GM12878 (cell line): ENCODE measurements at regions of chr12 and their contacts with region 1.

Region 1: DNA sequence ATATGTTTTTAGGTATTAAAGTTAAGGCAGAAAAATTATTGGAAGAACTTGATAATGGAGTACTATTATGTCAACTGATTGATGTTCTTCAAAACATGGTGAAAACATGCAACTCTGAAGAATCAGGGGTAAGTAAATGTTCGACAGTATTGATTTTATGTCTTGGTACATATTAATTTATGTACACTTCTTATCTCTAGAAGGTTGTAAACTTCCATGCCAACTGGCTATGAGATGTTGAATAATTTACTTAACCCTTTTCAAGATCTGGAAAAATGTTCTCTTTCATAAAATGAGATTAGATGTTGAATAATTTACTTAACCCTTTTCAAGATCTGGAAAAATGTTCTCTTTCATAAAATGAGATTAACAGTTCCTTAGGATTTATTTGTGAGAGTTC is 28.1 kb downstream of the GAS2L3 start:
- DNase-seq: no peak
- ATAC-seq: no peak
- H3K4me3 ChIP-seq: no peak overlapping the region
- H3K27ac ChIP-seq: no peak overlapping the region
- H3K4me1 ChIP-seq: no peaks in the 10 kb centered on the region
- H3K27me3 ChIP-seq: no peaks in the 10 kb centered on the region
- CTCF ChIP-seq: no peak
- EP300 ChIP-seq: no peak
- POLR2A ChIP-seq: no peak
- RAD21 ChIP-seq: no peak

Region 2: GRCh38 chr12:100573292-100574186 is 28.1 kb before region 1 on chr12 and contains the start of gene GAS2L3:
- CTCF ChIA-PET with region 1: no interaction called
- POLR2A ChIA-PET with region 1: interaction called, 11 read pairs
- RAD21 ChIA-PET with region 1: no interaction called
- SMC1A ChIA-PET with region 1: no interaction called
- in situ Hi-C with region 1: no loop called
- intact Hi-C with region 1: no loop called
- DNase-seq: no peak
- ATAC-seq: peak; percentile 98
- H3K4me3 ChIP-seq: peak within 1 kb of the TSS; percentile 87
- H3K27ac ChIP-seq: peak within 1 kb of the TSS; percentile 50
- H3K4me1 ChIP-seq: peaks cover 12% of the 10 kb centered on the region
- H3K27me3 ChIP-seq: no peaks in the 10 kb centered on the region
- CTCF ChIP-seq: no peak
- EP300 ChIP-seq: 0 out of 4 replicates have a peak, but pooled peaks of 1 of the 2 experiments have one; percentile 17
- POLR2A ChIP-seq: peak; percentile 61; the same call in 1 of the 2 replicates
- RAD21 ChIP-seq: no peak
- polyA plus RNA-seq, gene GAS2L3: 0.46 to 0.63 TPM